Cardiac septum (tissue), 1 donor: ENCODE measurements at regions of chr19 and their contacts with region 1.

Region 1: GRCh38 chr19:41959056-41960053 is at the start of gene RABAC1:
- DNase-seq: peak; percentile 96
- total RNA-seq, gene RABAC1: 92.0 TPM

Region 2: DNA sequence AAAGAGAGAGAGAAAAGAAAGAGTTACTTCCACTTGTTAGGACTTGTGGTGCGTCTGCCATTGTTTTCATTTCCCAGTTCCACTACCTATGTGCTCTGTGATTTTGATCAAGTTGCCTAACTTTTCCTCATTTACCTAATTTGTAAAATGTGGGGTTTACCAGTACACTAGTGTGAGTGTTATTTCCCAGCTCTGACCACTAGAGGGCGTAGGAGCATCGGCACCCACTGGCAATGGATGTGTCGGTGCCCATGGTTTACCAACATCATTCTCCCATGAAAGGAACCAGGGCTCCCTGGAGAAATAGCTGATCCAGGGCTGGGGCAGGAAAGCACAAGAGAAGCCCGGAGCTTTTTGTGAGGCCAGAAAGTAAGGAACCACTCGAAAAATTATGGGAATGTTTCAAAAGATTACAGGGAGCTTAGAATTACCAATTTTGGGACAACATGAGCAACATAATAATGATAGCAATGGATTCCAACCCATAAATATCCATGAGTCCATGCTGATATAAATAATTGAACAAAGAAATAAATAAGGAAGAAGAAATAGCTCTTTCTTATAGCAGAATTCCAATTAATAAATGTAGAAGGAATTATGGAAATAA is 317.4 kb before region 1 on chr19:
- intact Hi-C with region 1: no loop called
- DNase-seq: no peak

Region 3: DNA sequence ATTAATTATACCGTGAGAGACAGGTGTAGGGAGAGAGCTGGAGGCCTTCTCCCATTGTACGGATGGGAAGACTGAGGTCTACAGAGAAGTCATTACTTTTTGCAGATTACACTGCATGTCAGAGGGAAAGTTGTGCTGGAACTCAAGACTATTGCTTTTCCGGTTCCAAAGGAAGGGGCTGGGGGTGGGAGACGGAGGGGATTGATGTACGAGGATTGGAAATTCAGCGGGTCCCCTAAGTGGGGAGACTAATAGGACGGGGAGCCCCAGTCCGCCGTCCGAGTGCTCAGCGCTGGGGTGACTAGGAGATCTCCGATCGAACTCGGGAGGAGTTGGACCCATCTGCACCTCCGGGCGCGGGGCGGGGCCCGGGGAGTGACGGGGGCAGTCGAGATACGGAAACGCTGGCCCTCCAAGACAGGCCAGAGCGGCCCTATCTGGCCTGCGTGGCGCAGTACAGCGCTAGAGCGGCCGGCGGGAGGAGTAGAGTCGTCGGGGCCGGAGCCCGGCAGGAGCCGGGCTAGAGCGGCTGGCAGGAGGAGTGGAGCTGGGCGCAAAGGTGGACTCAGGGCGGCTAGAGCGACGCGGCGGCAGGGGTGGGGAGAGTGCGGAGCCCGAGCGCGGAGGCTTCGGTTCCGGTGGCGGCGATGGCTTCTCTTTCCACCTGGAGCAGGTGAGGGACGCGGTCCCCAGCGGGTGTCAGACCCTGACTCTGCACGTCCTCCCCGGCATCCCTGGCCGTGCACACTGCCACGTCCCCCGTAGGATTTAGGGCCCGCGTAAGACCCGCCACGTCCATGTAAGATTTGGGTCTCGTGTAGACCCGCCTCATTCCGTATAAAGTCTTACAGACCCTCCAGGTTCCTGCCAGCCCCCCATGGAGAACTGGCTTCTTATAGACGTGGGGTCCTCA is 75.3 kb before region 1 on chr19:
- intact Hi-C with region 1: loop called (anchors 5 kb)
- DNase-seq: peak; percentile 96

Region 4: GRCh38 chr19:41920882-41921576 is 38.3 kb before region 1 on chr19:
- intact Hi-C with region 1: no loop called
- DNase-seq: no peak